G401 (cell line): ENCODE measurements at regions of chr14 and their contacts with region 1.

Region 1: GRCh38 chr14:91420686-91421085 is 3.1 kb upstream of the CCDC88C start:
- DNase-seq: no peak

Region 2: DNA sequence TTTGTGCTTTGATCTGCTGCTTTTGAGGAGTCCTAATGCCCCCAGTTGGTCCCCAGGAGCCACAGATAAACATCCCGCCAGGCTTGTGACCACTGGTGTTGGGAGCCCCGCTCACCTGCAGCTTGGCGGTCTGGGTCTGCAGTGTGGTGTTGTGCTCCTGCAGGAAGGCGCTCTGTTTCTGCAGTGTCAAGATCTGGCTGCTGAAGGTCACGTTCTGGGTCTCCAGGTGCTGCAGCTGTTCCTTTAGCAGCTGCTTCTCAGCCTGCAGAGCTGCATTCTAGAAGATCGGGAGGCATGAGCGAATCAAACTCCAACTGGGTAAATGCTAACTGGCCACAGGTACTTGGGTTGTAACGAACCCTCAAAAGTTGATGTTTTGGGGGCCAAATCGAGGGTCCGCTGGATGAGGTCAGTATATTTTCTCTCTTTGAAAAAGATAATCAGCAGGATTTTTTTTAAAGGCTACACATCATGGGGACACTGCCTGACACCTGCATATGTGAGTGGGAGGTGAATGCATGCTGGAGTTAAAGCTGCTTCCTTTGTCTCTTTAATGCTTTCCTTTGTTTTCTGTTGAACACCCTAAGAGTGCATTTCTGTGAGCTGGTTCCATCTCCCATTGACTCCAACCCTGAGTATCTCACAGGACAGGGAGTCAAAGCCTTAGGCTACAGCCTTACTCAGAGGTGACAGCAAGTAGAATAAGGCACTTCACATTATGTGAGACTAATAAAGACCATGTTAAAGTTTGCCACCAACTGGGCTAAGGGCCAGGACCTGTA is 114.8 kb before region 1 on chr14:
- in situ Hi-C with region 1: loop called (anchors 5 kb)
- DNase-seq: no peak

Region 3: GRCh38 chr14:91482263-91483013 is 61.8 kb after region 1 on chr14:
- in situ Hi-C with region 1: no loop called
- DNase-seq: no peak